ENCODE measurements at regions of chr12 and their contacts with region 1.

Region 1: DNA sequence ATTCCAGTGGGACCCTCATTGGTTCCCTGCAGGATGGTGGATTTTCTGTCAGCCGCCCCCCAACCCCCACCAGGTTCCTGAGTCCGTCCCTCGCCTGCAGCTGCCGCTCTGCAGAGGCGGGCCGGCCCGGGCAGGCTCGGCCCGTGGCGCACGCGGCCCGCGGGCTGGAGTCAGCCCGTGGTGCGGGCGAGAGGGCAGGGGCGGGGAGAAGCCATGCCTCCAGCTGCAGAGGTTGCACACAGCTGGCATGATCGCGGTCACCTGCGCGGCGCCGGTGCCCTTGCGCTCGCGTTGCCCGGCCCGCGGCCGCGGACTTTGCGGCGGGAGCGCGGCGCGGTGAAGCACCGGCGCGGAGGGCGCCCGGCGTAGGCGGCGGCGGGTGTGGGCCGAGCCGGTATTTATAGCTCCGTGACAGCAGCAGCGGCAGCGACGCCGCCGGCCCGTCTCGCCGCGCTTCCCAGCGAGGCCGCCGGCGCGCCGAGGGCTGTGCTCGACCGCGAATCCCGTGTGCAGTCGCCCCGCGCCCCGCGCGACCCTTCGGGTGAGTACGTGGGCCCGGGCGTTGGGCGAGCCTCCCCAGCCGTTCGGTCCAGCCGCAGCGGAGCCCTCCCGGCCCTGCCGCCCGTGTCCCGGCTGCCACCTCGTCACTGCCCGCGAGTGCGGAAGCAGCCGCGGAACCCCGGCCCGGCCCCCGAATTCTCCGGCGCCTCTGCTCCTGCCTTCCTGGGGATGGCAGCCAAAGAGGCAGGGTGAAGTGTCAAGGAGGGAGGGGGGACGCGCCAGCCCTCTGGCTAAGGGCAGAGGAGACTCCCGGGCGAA is at the start of gene TMEM117:
- DNase-seq: peak; percentile 43 to 61
- ATAC-seq: peak; percentile 85 to 94
- H3K4me3 ChIP-seq: peak within 1 kb of the TSS; percentile 67 to 87 (median 70)
- H3K27ac ChIP-seq: peak within 1 kb of the TSS; percentile 82 to 96 (median 93)
- H3K4me1 ChIP-seq: peaks cover 0 to 15% of the 10 kb centered on the region in 2 donors
- H3K27me3 ChIP-seq: no peaks in the 10 kb centered on the region
- CTCF ChIP-seq: no peak
- POLR2A ChIP-seq: peak; percentile 63 to 69
- total RNA-seq, gene TMEM117: 3.5 to 19.4 (median 6.1) TPM

Region 2: GRCh38 chr12:43805860-43806736 is 29.8 kb before region 1 on chr12 and contains the start of gene TWF1:
- in situ Hi-C with region 1: no loop called
- intact Hi-C with region 1: loop called (anchors 1 kb)
- DNase-seq: peak; percentile 58 to 77
- ATAC-seq: peak; percentile 98
- H3K4me3 ChIP-seq: peak within 1 kb of the TSS; percentile 80 to 92 (median 86)
- H3K27ac ChIP-seq: peak within 1 kb of the TSS; percentile 87 to 96 (median 94)
- H3K4me1 ChIP-seq: peaks cover 21 to 27% of the 10 kb centered on the region in 2 donors
- H3K27me3 ChIP-seq: no peaks in the 10 kb centered on the region
- CTCF ChIP-seq: peak in 4 of 5 experiments; percentile 31 to 56 (median 43)
- POLR2A ChIP-seq: peak; percentile 62 to 76
- total RNA-seq, gene TWF1: 7.4 to 10.7 (median 9.0) TPM

Measured in gastrocnemius medialis (tissue), 4 donors.